ENCODE measurements at regions of chr2 and their contacts with region 1.

Region 1: GRCh38 chr2:43611987-43612894 is 16.4 kb upstream of the THADA start:
- DNase-seq: peak; percentile 73 to 76
- H3K4me3 ChIP-seq: no peak overlapping the region
- H3K27ac ChIP-seq: no peak overlapping the region
- H3K4me1 ChIP-seq: peaks cover 0 to 10% (median 0%) of the 10 kb centered on the region in 4 donors
- H3K27me3 ChIP-seq: no peaks in the 10 kb centered on the region
- CTCF ChIP-seq: peak; percentile 72 to 75

Region 2: DNA sequence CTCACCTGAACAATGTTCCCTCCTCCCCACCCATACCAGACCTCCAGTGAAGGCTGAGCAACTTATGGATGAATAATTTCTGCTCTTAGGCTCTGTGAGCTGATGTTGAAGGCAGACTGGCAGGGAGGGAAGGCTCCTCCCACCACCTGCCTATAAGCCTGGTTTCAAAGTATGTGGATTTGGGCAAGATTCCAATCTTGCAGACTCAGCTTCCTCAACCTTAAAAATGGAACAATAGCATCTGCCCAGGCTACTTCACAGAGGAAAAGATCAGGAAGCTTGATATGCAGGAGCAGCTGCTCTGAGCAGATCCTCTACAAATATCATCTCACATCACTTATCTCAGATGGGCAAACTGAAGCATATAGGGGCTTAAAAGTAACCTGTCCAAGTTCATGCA is 498.0 kb before region 1 on chr2:
- intact Hi-C with region 1: no loop called
- DNase-seq: no peak
- H3K4me3 ChIP-seq: no peak overlapping the region
- H3K27ac ChIP-seq: no peak overlapping the region
- H3K4me1 ChIP-seq: peaks cover 0 to 19% (median 12%) of the 10 kb centered on the region in 4 donors
- H3K27me3 ChIP-seq: no peaks in the 10 kb centered on the region
- CTCF ChIP-seq: no peak

Region 3: GRCh38 chr2:43676322-43677050 is 64.2 kb after region 1 on chr2 and contains the start of gene C1GALT1C1L:
- intact Hi-C with region 1: no loop called
- DNase-seq: peak; percentile 45 to 77
- H3K4me3 ChIP-seq: peak within 1 kb of the TSS; percentile 63 to 66
- H3K27ac ChIP-seq: peak within 1 kb of the TSS; percentile 64 to 70
- H3K4me1 ChIP-seq: peaks cover 0 to 8% (median 0%) of the 10 kb centered on the region in 4 donors
- H3K27me3 ChIP-seq: no peaks in the 10 kb centered on the region
- CTCF ChIP-seq: no peak

Region 4: DNA sequence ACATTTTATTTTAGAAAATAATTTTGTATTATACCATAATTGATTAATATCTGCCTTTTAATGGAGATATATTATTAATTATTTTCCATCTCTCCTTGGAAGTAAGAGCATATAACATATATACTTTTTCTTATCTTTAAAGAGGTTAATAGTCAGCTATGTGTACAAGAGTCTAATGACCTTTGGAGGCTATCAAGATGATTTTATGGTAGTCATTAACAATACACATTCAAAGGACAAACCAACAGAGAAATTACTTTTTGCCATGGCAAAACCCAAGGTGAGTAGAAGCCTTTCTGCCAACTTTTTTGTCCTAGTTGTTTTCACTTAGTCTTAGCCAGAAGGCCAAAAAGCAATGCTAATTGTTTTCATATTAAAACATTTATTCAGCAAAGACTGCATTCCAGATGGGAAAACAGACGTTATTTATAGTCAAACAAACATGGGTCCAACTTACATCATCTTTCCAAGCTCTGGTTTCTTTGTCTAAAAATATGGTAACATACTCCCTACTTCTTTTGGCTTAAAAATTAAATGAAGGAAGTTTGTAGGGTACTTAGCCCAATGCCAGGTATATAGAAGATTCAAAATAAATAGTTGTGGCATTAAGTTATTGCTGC is 152.0 kb after region 1 on chr2:
- intact Hi-C with region 1: loop called (anchors 10 kb)
- DNase-seq: no peak
- H3K4me3 ChIP-seq: no peak overlapping the region
- H3K27ac ChIP-seq: peak overlapping the region; percentile 9 to 40
- H3K4me1 ChIP-seq: peaks cover 0 to 16% (median 0%) of the 10 kb centered on the region in 4 donors
- H3K27me3 ChIP-seq: no peaks in the 10 kb centered on the region
- CTCF ChIP-seq: no peak

Region 5: GRCh38 chr2:43798300-43798699 is 186.1 kb after region 1 on chr2:
- intact Hi-C with region 1: no loop called
- DNase-seq: no peak
- H3K4me3 ChIP-seq: no peak overlapping the region
- H3K27ac ChIP-seq: no peak overlapping the region
- H3K4me1 ChIP-seq: no peaks in the 10 kb centered on the region
- H3K27me3 ChIP-seq: no peaks in the 10 kb centered on the region
- CTCF ChIP-seq: peak in 1 of 2 experiments; percentile 5

Region 6: DNA sequence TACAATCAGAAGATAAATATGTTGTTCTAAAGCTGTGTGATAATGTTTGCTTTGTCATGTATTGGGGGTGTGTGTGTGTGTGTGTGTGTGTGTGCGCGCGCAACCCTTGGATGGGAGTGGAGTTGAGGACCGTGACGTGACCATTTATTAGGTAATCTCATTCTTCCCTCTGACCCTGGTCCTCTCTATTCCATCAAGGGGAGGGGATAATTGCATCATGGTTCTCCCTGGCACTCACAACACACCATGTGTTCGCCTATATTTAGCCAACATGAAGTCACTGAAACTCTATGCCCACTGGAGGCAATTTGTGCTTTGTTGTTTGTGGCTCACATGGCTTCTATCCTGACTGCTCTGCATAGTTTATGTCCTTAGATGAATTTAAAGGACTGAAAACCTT is 463.3 kb after region 1 on chr2:
- intact Hi-C with region 1: no loop called
- DNase-seq: peak; percentile 35 to 78
- H3K4me3 ChIP-seq: no peak overlapping the region
- H3K27ac ChIP-seq: peak overlapping the region; percentile 47 to 67
- H3K4me1 ChIP-seq: peaks cover 0 to 9% (median 0%) of the 10 kb centered on the region in 4 donors
- H3K27me3 ChIP-seq: no peaks in the 10 kb centered on the region
- CTCF ChIP-seq: no peak